GM12878 (cell line): ENCODE measurements at regions of chr1 and their contacts with region 1.

Region 1: GRCh38 chr1:158203693-158204457 is 23.2 kb downstream of the CD1D start:
- DNase-seq: peak; percentile 8
- ATAC-seq: peak; percentile 92
- H3K4me3 ChIP-seq: no peak overlapping the region
- H3K27ac ChIP-seq: no peak overlapping the region
- H3K4me1 ChIP-seq: no peaks in the 10 kb centered on the region
- H3K27me3 ChIP-seq: no peaks in the 10 kb centered on the region
- CTCF ChIP-seq: peak; percentile 56 to 70 (median 56); a peak in 5 of 6 replicates
- EP300 ChIP-seq: no peak
- POLR2A ChIP-seq: no peak
- RAD21 ChIP-seq: peak; percentile 68

Region 2: GRCh38 chr1:157646144-157646543 is 557.7 kb before region 1 on chr1:
- CTCF ChIA-PET with region 1: no interaction called
- POLR2A ChIA-PET with region 1: no interaction called
- RAD21 ChIA-PET with region 1: no interaction called
- SMC1A ChIA-PET with region 1: no interaction called
- in situ Hi-C with region 1: no loop called
- intact Hi-C with region 1: no loop called
- DNase-seq: no peak
- ATAC-seq: no peak
- H3K4me3 ChIP-seq: no peak overlapping the region
- H3K27ac ChIP-seq: no peak overlapping the region
- H3K4me1 ChIP-seq: no peaks in the 10 kb centered on the region
- H3K27me3 ChIP-seq: peaks cover 3 to 13% of the 10 kb centered on the region in 2 experiments
- CTCF ChIP-seq: no peak
- EP300 ChIP-seq: no peak
- POLR2A ChIP-seq: no peak
- RAD21 ChIP-seq: no peak

Region 3: DNA sequence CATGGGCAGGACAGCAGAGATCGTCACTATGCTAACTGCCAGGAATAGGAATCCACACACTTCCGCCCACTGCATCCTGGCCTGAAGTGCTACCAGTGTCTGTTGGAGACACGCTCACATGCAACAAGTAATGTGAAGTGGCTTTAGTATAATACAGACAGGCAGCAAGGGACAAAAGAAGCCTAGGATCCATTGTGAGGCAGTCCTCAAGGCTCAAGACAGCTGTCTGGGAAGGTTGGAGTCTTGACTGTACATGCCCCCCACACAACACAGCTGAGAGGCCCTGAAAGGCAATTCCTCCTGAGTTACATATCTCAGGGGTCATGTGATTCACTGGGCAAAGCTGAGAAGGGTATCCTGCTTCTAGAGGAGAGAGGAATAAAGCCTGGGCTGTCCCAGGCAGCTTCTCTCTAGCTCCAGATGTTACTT is 63.1 kb before region 1 on chr1:
- CTCF ChIA-PET with region 1: no interaction called
- POLR2A ChIA-PET with region 1: no interaction called
- RAD21 ChIA-PET with region 1: no interaction called
- SMC1A ChIA-PET with region 1: no interaction called
- in situ Hi-C with region 1: no loop called
- intact Hi-C with region 1: no loop called
- DNase-seq: no peak
- ATAC-seq: no peak
- H3K4me3 ChIP-seq: no peak overlapping the region
- H3K27ac ChIP-seq: no peak overlapping the region
- H3K4me1 ChIP-seq: no peaks in the 10 kb centered on the region
- H3K27me3 ChIP-seq: no peaks in the 10 kb centered on the region
- CTCF ChIP-seq: no peak
- EP300 ChIP-seq: no peak
- POLR2A ChIP-seq: no peak
- RAD21 ChIP-seq: no peak

Region 4: GRCh38 chr1:158163000-158163947 is 40.6 kb before region 1 on chr1:
- CTCF ChIA-PET with region 1: interaction called, 12 read pairs
- POLR2A ChIA-PET with region 1: interaction called, 3 read pairs
- RAD21 ChIA-PET with region 1: no interaction called
- SMC1A ChIA-PET with region 1: interaction called, 9 read pairs
- in situ Hi-C with region 1: no loop called
- intact Hi-C with region 1: no loop called
- DNase-seq: no peak
- ATAC-seq: peak; percentile 100
- H3K4me3 ChIP-seq: no peak overlapping the region
- H3K27ac ChIP-seq: no peak overlapping the region
- H3K4me1 ChIP-seq: peaks cover 19% of the 10 kb centered on the region
- H3K27me3 ChIP-seq: peaks cover 0 to 5% of the 10 kb centered on the region in 2 experiments; a peak in 1 of 4 replicates
- CTCF ChIP-seq: no peak
- EP300 ChIP-seq: peak in 1 of 2 experiments; percentile 30; a peak in 1 of 4 replicates
- POLR2A ChIP-seq: no peak
- RAD21 ChIP-seq: no peak

Region 5: DNA sequence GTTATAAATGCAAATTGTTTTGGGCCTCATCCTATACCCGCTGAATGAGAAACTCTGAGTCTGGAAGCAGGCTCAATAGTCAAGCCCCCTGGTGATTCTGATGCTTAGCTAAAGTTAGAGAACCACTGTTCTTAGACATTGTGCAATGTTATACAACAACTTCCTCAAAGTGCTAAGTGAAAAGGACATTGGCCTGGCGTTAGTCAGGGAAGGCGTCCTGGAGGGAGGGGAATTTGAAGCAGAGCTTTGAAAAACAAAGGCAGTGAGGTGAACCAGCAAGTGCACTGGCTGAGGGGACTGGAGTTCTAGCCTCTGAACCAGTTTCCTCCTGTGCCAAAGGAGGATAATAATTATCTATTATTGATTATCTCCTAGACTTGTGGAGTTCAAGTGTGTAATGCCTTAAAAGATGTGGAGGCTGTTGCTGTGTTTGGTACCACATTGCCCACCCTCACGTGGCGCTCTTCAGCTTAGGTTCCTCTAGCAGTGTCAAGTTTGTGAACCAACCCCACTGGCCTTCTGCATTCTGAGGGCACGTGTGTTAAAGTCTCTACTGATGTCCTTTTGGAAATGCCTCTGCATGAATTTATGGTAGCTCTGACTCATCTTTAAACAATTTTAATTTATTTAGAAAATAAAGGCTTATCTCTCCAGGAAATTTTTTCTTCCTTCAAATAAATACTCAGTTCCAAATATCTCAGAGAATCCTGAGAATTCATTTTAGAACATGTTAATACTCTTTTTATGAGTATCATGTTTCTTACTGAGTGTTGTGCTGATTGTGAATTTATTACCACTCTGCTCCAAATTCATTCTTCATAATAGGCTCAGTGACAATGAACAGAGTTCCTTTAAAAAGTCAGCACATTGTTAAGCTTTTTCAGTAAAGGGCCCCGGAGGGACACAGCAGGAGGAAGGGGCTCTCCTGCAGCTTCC is 17.8 kb before region 1 on chr1:
- CTCF ChIA-PET with region 1: interaction called, 15 read pairs
- POLR2A ChIA-PET with region 1: no interaction called
- RAD21 ChIA-PET with region 1: interaction called, 4 read pairs
- SMC1A ChIA-PET with region 1: interaction called, 3 read pairs
- in situ Hi-C with region 1: no loop called
- intact Hi-C with region 1: no loop called
- DNase-seq: no peak
- ATAC-seq: no peak
- H3K4me3 ChIP-seq: no peak overlapping the region
- H3K27ac ChIP-seq: no peak overlapping the region
- H3K4me1 ChIP-seq: peaks cover 7% of the 10 kb centered on the region
- H3K27me3 ChIP-seq: peaks cover 11 to 25% of the 10 kb centered on the region in 2 experiments
- CTCF ChIP-seq: no peak
- EP300 ChIP-seq: no peak
- POLR2A ChIP-seq: no peak
- RAD21 ChIP-seq: no peak

Region 6: GRCh38 chr1:158285756-158286241 is 81.9 kb after region 1 on chr1:
- CTCF ChIA-PET with region 1: interaction called, 17 read pairs
- POLR2A ChIA-PET with region 1: no interaction called
- RAD21 ChIA-PET with region 1: interaction called, 11 read pairs
- SMC1A ChIA-PET with region 1: interaction called, 6 read pairs
- in situ Hi-C with region 1: no loop called
- intact Hi-C with region 1: loop called (anchors 5 kb)
- DNase-seq: peak; percentile 79
- ATAC-seq: peak; percentile 75
- H3K4me3 ChIP-seq: no peak overlapping the region
- H3K27ac ChIP-seq: peak overlapping the region; percentile 88
- H3K4me1 ChIP-seq: peaks cover 57% of the 10 kb centered on the region
- H3K27me3 ChIP-seq: no peaks in the 10 kb centered on the region
- CTCF ChIP-seq: no peak
- EP300 ChIP-seq: peak; percentile 51 to 60; a peak in 1 of 4 replicates
- POLR2A ChIP-seq: peak; percentile 31; the same call in 1 of the 2 replicates
- RAD21 ChIP-seq: no peak

Region 7: GRCh38 chr1:158329733-158330132 is 125.9 kb after region 1 on chr1:
- CTCF ChIA-PET with region 1: interaction called, 267 read pairs
- POLR2A ChIA-PET with region 1: interaction called, 6 read pairs
- RAD21 ChIA-PET with region 1: interaction called, 179 read pairs
- SMC1A ChIA-PET with region 1: interaction called, 172 read pairs
- in situ Hi-C with region 1: loop called (anchors 10 kb)
- intact Hi-C with region 1: loop called (anchors 1 kb)
- DNase-seq: no peak
- ATAC-seq: peak; percentile 84
- H3K4me3 ChIP-seq: no peak overlapping the region
- H3K27ac ChIP-seq: no peak overlapping the region
- H3K4me1 ChIP-seq: peaks cover 5% of the 10 kb centered on the region
- H3K27me3 ChIP-seq: no peaks in the 10 kb centered on the region
- CTCF ChIP-seq: peak; percentile 61 to 69 (median 63)
- EP300 ChIP-seq: no peak
- POLR2A ChIP-seq: no peak
- RAD21 ChIP-seq: peak; percentile 80

Region 8: DNA sequence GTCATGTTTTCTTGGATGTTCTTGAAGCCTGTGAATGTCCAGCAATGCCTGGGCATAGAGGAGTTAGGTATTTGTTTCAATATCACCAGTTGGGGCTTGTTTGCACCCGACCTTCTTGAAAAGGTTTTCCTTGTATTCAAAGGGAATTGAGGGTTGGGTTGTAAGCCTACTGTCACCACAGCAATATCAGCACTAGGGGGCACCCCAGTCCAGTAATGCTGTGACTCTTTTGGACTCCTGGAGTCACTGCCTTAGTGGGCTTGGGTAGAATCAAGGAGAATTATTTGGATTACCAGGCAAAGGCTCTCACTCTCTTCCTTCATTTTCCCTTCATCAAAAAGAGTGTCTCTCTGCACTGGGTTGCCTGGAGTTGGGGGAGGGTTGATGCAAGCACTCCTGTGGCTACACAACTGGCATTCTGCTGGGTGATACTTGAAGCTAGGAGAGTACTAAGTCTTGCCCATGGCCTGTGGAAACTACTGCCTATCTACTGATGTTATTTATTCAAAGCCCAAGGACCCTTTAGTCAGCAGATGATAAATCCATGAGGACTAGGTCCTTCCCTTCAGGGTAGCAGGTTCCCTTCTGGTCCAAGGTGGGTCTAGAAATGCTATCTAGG is 302.6 kb after region 1 on chr1:
- CTCF ChIA-PET with region 1: interaction called, 8 read pairs
- POLR2A ChIA-PET with region 1: no interaction called
- RAD21 ChIA-PET with region 1: interaction called, 5 read pairs
- SMC1A ChIA-PET with region 1: interaction called, 10 read pairs
- in situ Hi-C with region 1: no loop called
- intact Hi-C with region 1: no loop called
- DNase-seq: peak; percentile 8
- ATAC-seq: peak; percentile 93
- H3K4me3 ChIP-seq: no peak overlapping the region
- H3K27ac ChIP-seq: no peak overlapping the region
- H3K4me1 ChIP-seq: no peaks in the 10 kb centered on the region
- H3K27me3 ChIP-seq: no peaks in the 10 kb centered on the region; a peak in 1 of 4 replicates
- CTCF ChIP-seq: peak; percentile 66 to 72 (median 67)
- EP300 ChIP-seq: no peak
- POLR2A ChIP-seq: no peak
- RAD21 ChIP-seq: peak; percentile 87

Region 9: GRCh38 chr1:158752155-158752712 is 548.4 kb after region 1 on chr1:
- CTCF ChIA-PET with region 1: no interaction called
- POLR2A ChIA-PET with region 1: no interaction called
- RAD21 ChIA-PET with region 1: no interaction called
- SMC1A ChIA-PET with region 1: no interaction called
- in situ Hi-C with region 1: no loop called
- intact Hi-C with region 1: no loop called
- DNase-seq: no peak
- ATAC-seq: no peak
- H3K4me3 ChIP-seq: no peak overlapping the region
- H3K27ac ChIP-seq: no peak overlapping the region
- H3K4me1 ChIP-seq: no peaks in the 10 kb centered on the region
- H3K27me3 ChIP-seq: 0 out of 4 replicates have a peak, but pooled peaks cover 0 to 1% of the 10 kb centered on the region in 2 experiments
- CTCF ChIP-seq: no peak
- EP300 ChIP-seq: no peak
- POLR2A ChIP-seq: no peak
- RAD21 ChIP-seq: no peak

Region 10: GRCh38 chr1:158983225-158983624 is 779.4 kb after region 1 on chr1:
- CTCF ChIA-PET with region 1: no interaction called
- POLR2A ChIA-PET with region 1: no interaction called
- RAD21 ChIA-PET with region 1: no interaction called
- SMC1A ChIA-PET with region 1: no interaction called
- in situ Hi-C with region 1: no loop called
- intact Hi-C with region 1: no loop called
- DNase-seq: no peak
- ATAC-seq: no peak
- H3K4me3 ChIP-seq: no peak overlapping the region
- H3K27ac ChIP-seq: no peak overlapping the region
- H3K4me1 ChIP-seq: no peaks in the 10 kb centered on the region
- H3K27me3 ChIP-seq: no peaks in the 10 kb centered on the region
- CTCF ChIP-seq: no peak
- EP300 ChIP-seq: no peak
- POLR2A ChIP-seq: no peak
- RAD21 ChIP-seq: no peak

Region 11: GRCh38 chr1:159089184-159089791 is 885.4 kb after region 1 on chr1:
- CTCF ChIA-PET with region 1: interaction called, 10 read pairs
- POLR2A ChIA-PET with region 1: no interaction called
- RAD21 ChIA-PET with region 1: interaction called, 3 read pairs
- SMC1A ChIA-PET with region 1: no interaction called
- in situ Hi-C with region 1: no loop called
- intact Hi-C with region 1: no loop called
- DNase-seq: no peak
- ATAC-seq: peak; percentile 83
- H3K4me3 ChIP-seq: no peak overlapping the region
- H3K27ac ChIP-seq: no peak overlapping the region
- H3K4me1 ChIP-seq: no peaks in the 10 kb centered on the region
- H3K27me3 ChIP-seq: 0 out of 4 replicates have a peak, but pooled peaks cover 0 to 2% of the 10 kb centered on the region in 2 experiments
- CTCF ChIP-seq: peak; percentile 58 to 73 (median 71)
- EP300 ChIP-seq: no peak
- POLR2A ChIP-seq: no peak
- RAD21 ChIP-seq: peak; percentile 62